A549 (cell line): ENCODE measurements at regions of chr3 and their contacts with region 1.

Region 1: GRCh38 chr3:124467980-124468902 is 262.0 kb upstream of the UMPS start:
- DNase-seq: peak; percentile 44 to 65
- ATAC-seq: peak; percentile 90 to 98
- H3K4me3 ChIP-seq: no peak overlapping the region
- H3K27ac ChIP-seq: no peak overlapping the region
- H3K4me1 ChIP-seq: no peaks in the 10 kb centered on the region
- CTCF ChIP-seq: peak; percentile 93
- EP300 ChIP-seq: no peak
- POLR2A ChIP-seq: no peak
- RAD21 ChIP-seq: peak; percentile 95 to 98

Region 2: DNA sequence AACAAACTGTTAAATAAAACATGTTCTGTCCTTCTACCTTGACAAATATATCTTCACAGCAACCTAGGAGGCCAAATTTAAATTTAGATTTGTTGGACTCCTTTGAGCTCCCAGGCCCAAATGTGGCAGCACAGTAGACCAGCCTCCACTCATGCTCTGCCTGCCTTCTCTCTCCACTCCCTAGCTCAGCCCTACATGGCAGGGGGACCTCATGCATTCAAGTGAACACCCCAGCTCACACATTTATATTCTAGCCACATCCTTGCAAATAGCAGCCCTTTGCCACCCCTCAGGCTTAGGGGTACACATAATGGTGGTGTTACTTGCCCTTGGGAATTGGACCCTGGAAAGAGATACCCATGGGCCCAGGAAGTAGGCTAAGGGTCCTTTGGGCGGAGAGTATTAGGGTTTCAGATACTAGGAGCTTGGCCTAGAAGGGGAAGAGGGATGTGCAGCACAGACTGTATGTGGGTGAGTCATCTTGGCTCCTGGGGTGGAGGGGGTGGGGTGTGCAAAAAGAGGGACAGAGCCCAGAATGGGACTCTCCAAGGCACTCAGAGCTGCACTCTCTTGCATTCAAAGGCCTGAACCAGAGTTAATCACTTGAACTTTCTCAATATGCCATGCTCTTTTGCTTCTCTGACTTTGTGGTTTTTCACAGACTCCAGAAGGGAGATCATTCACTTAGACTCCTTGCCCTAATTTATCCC is 207.9 kb before region 1 on chr3:
- CTCF ChIA-PET with region 1: no interaction called
- POLR2A ChIA-PET with region 1: no interaction called
- DNase-seq: peak; percentile 19 to 27
- ATAC-seq: peak; percentile 79 to 81
- H3K4me3 ChIP-seq: no peak overlapping the region
- H3K27ac ChIP-seq: peak overlapping the region; percentile 56 to 78
- H3K4me1 ChIP-seq: peaks cover 40% of the 10 kb centered on the region
- CTCF ChIP-seq: no peak
- EP300 ChIP-seq: no peak
- POLR2A ChIP-seq: no peak
- RAD21 ChIP-seq: no peak

Region 3: GRCh38 chr3:124288996-124289395 is 179.2 kb before region 1 on chr3:
- CTCF ChIA-PET with region 1: no interaction called
- POLR2A ChIA-PET with region 1: no interaction called
- DNase-seq: no peak
- ATAC-seq: no peak
- H3K4me3 ChIP-seq: no peak overlapping the region
- H3K27ac ChIP-seq: no peak overlapping the region
- H3K4me1 ChIP-seq: peaks cover 9% of the 10 kb centered on the region
- CTCF ChIP-seq: no peak
- EP300 ChIP-seq: no peak
- POLR2A ChIP-seq: no peak
- RAD21 ChIP-seq: no peak

Region 4: GRCh38 chr3:124313155-124313554 is 155.1 kb before region 1 on chr3:
- CTCF ChIA-PET with region 1: no interaction called
- POLR2A ChIA-PET with region 1: no interaction called
- DNase-seq: no peak
- ATAC-seq: peak in 1 of 2 experiments; percentile 40; a peak in 1 of 6 replicates
- H3K4me3 ChIP-seq: no peak overlapping the region
- H3K27ac ChIP-seq: no peak overlapping the region
- H3K4me1 ChIP-seq: peaks cover 7% of the 10 kb centered on the region; the same call in 1 of the 3 replicates
- CTCF ChIP-seq: no peak
- EP300 ChIP-seq: no peak
- POLR2A ChIP-seq: no peak
- RAD21 ChIP-seq: no peak

Region 5: DNA sequence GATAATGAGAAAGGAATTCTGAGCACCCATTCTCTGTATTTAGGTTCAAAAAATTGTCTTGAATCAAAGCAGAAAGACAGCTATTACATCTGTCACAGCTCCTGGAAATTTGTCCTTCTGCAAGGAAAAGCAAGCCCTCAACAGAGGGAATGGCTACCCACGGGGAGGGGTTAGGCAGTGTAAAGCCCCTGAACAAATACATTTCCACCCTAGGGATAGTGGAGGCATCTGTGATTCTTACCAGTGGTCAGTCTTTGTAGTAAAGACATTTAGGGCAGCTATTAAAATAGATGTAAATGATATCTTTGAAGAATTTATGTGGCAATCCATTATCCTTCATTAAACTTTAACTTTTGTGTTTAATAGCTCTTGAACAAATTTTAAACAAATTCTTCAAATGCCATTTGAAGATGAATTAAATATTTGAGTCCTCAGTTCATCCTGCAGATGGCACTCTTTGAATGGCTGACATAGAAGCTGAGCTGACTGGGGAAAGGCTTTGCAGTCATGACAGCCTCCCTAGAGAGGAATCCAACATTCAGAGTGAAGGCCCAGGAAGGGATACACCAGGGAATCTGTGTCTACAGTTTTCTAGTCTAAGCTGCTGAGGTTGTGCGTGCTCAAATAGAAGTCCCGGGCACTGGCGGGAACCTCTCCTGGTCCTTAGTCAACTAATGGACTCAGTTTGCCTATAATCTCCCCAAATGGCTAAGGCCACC is 116.7 kb before region 1 on chr3:
- CTCF ChIA-PET with region 1: interaction called, 110 read pairs
- POLR2A ChIA-PET with region 1: no interaction called
- DNase-seq: peak; percentile 60 to 63
- ATAC-seq: peak; percentile 69 to 90
- H3K4me3 ChIP-seq: no peak overlapping the region
- H3K27ac ChIP-seq: no peak overlapping the region
- H3K4me1 ChIP-seq: peaks cover 6% of the 10 kb centered on the region; the same call in 2 of the 3 replicates
- CTCF ChIP-seq: peak; percentile 71
- EP300 ChIP-seq: no peak
- POLR2A ChIP-seq: no peak
- RAD21 ChIP-seq: peak; percentile 75 to 84

Region 6: DNA sequence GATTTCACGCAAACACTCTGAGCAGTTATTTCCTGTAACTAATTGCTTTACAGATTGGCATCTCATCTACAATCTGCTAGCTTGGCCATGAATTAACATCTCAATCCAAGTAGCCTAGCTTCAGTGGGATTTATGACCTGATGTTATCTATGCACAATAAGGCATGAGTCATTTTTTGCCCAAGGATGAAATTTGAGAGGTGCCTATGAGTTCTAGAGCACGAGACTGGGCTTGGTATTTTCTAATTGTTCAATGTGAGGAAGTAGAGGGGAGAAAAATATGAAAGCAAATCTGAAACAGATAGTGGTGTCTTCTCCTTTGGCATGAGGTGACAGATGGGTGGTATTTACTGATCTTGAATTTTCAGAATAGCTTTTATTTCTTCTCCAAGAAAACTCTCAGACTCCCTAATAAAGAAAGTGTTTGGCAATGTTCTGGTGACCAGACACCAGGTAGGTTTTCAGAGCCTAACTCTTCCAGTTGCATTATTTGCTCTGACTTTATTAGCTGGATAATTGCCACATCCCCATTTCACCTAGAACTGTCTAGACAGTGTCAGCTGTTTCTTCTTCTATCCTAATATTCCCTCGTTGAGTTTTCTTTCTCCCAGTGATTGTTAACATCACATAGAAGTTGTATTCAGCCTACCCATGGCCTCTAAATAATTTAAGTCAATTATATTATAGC is 39.0 kb before region 1 on chr3:
- CTCF ChIA-PET with region 1: interaction called, 12 read pairs
- POLR2A ChIA-PET with region 1: no interaction called
- DNase-seq: peak; percentile 9 to 10
- ATAC-seq: no peak
- H3K4me3 ChIP-seq: no peak overlapping the region
- H3K27ac ChIP-seq: no peak overlapping the region
- H3K4me1 ChIP-seq: peaks cover 7% of the 10 kb centered on the region; the same call in 2 of the 3 replicates
- CTCF ChIP-seq: no peak
- EP300 ChIP-seq: no peak
- POLR2A ChIP-seq: no peak
- RAD21 ChIP-seq: no peak

Region 7: GRCh38 chr3:124486324-124486723 is 18.1 kb after region 1 on chr3:
- CTCF ChIA-PET with region 1: interaction called, 14 read pairs
- POLR2A ChIA-PET with region 1: no interaction called
- DNase-seq: peak in 1 of 2 experiments; percentile 23
- ATAC-seq: peak in 1 of 2 experiments; percentile 77; a peak in 3 of 6 replicates
- H3K4me3 ChIP-seq: no peak overlapping the region
- H3K27ac ChIP-seq: no peak overlapping the region
- H3K4me1 ChIP-seq: no peaks in the 10 kb centered on the region
- CTCF ChIP-seq: no peak
- EP300 ChIP-seq: no peak
- POLR2A ChIP-seq: no peak
- RAD21 ChIP-seq: peak in 1 of 2 experiments; percentile 24; a peak in 1 of 5 replicates

Region 8: GRCh38 chr3:124517306-124517705 is 49.1 kb after region 1 on chr3:
- CTCF ChIA-PET with region 1: interaction called, 11 read pairs
- POLR2A ChIA-PET with region 1: no interaction called
- DNase-seq: no peak
- ATAC-seq: no peak
- H3K4me3 ChIP-seq: no peak overlapping the region
- H3K27ac ChIP-seq: no peak overlapping the region
- H3K4me1 ChIP-seq: peaks cover 30% of the 10 kb centered on the region
- CTCF ChIP-seq: no peak
- EP300 ChIP-seq: no peak
- POLR2A ChIP-seq: no peak
- RAD21 ChIP-seq: no peak

Region 9: GRCh38 chr3:124552239-124552638 is 84.0 kb after region 1 on chr3:
- CTCF ChIA-PET with region 1: interaction called, 12 read pairs
- POLR2A ChIA-PET with region 1: no interaction called
- DNase-seq: peak; percentile 29 to 64
- ATAC-seq: peak; percentile 36 to 47; a peak in 3 of 6 replicates
- H3K4me3 ChIP-seq: no peak overlapping the region
- H3K27ac ChIP-seq: no peak overlapping the region
- H3K4me1 ChIP-seq: peaks cover 24% of the 10 kb centered on the region
- CTCF ChIP-seq: no peak
- EP300 ChIP-seq: no peak
- POLR2A ChIP-seq: no peak
- RAD21 ChIP-seq: no peak

Region 10: DNA sequence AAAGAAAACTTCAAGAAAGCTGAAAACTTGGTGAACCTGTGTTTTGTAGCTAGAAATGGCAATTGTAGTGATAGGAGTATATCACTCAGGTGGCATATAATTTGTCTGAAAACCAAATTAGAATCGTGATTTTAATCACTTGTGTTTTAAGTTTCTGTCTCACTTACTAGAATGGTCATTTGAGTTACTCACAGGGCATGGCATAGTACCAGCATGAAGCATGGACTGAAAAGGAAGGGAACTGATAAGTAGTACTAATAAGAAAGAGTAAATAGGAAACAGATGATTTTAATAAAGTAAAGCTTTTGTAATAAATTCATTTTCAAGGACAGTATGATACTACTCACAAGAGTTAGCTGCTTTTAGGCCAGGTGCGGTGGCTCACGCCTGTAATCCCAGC is 1105.0 kb after region 1 on chr3:
- CTCF ChIA-PET with region 1: no interaction called
- POLR2A ChIA-PET with region 1: no interaction called
- DNase-seq: no peak
- ATAC-seq: no peak
- H3K4me3 ChIP-seq: no peak overlapping the region
- H3K27ac ChIP-seq: no peak overlapping the region
- H3K4me1 ChIP-seq: no peaks in the 10 kb centered on the region
- CTCF ChIP-seq: no peak
- EP300 ChIP-seq: no peak
- POLR2A ChIP-seq: no peak
- RAD21 ChIP-seq: no peak